HCT116 (cell line): ENCODE measurements at regions of chr12 and their contacts with region 1.

Region 1: DNA sequence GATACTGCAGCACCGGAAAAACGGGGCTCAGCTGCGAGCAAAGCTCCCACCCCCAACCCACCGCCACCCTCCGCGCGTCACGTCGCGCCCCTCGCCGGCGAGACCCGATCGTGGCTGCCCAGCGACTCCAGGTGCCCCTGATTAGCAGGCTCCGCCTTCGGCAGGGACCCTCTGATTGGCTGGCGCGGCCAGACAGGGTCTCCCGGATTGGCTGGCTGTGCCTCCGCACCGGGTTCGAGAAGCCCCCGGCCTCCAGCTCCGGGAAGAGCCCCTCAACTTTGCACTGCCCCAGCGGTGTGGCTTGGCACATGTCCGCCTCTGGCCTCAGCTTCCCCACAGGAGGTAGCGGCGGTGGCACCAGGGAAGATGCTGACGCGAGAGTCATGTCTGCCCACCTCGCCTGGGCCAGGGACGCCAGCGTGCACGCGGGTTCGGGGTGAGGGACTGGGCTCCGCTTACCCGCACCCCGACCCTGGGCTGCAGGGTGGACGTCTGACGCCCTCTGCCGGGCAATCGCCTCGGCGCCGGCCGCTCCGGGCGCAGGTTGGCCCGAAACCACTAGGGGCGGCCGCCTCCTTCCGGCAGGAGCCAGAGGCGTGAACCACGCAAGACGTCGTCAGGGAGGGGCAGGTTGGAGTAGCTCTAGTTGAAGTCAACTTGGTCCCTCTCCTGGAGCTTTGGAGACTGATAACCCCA is 498 bp upstream of the RHOF start:
- DNase-seq: peak; percentile 89
- ATAC-seq: peak; percentile 68
- H3K4me3 ChIP-seq: peak overlapping the region; percentile 90 to 91
- H3K27ac ChIP-seq: peak overlapping the region; percentile 100
- H3K4me1 ChIP-seq: peaks cover 60 to 92% of the 10 kb centered on the region in 2 experiments
- H3K27me3 ChIP-seq: no peaks in the 10 kb centered on the region
- CTCF ChIP-seq: peak in 2 of 3 experiments; percentile 99 to 100; a peak in 4 of 6 replicates
- POLR2A ChIP-seq: peak; percentile 43
- RAD21 ChIP-seq: no peak

Region 2: DNA sequence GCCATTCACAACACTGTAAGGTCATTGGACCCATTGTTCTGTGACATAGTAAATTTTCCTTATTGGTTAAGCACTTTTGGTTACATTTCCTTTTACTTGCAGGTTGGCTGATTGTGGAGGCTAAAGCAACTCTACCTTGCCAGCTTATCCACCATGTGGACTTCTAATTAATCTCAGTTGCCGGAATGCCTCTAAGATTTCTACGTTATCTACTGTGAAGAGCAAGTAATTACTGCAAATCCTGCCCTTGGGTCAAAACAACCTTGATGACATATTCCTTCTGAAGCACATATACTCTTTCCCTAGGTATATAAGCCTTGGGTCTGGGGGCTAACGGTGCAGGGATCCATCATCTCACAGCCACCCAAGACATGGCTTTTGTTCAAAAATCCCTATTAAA is 105.0 kb before region 1 on chr12:
- CTCF ChIA-PET with region 1: interaction called, 16 read pairs
- POLR2A ChIA-PET with region 1: no interaction called
- RAD21 ChIA-PET with region 1: interaction called in 1 of 2 experiments, 3 read pairs
- intact Hi-C with region 1: no loop called
- DNase-seq: no peak
- ATAC-seq: no peak
- H3K4me3 ChIP-seq: no peak overlapping the region
- H3K27ac ChIP-seq: no peak overlapping the region
- H3K4me1 ChIP-seq: peaks cover 4 to 15% of the 10 kb centered on the region in 2 experiments; a peak in 3 of 4 replicates
- H3K27me3 ChIP-seq: no peaks in the 10 kb centered on the region
- CTCF ChIP-seq: no peak
- POLR2A ChIP-seq: no peak
- RAD21 ChIP-seq: no peak

Region 3: GRCh38 chr12:121712461-121713256 is 81.3 kb before region 1 on chr12 and contains the start of gene TMEM120B:
- CTCF ChIA-PET with region 1: interaction called, 20 read pairs
- POLR2A ChIA-PET with region 1: no interaction called
- RAD21 ChIA-PET with region 1: no interaction called
- intact Hi-C with region 1: no loop called
- DNase-seq: no peak
- ATAC-seq: peak; percentile 89
- H3K4me3 ChIP-seq: peak within 1 kb of the TSS; percentile 89 to 94
- H3K27ac ChIP-seq: peak within 1 kb of the TSS; percentile 66
- H3K4me1 ChIP-seq: peaks cover 10 to 51% of the 10 kb centered on the region in 2 experiments; a peak in 3 of 4 replicates
- H3K27me3 ChIP-seq: no peaks in the 10 kb centered on the region
- CTCF ChIP-seq: peak in 2 of 3 experiments; percentile 8 to 26; a peak in 2 of 6 replicates
- POLR2A ChIP-seq: peak; percentile 74
- RAD21 ChIP-seq: no peak
- total RNA-seq, gene TMEM120B: 20.5 TPM

Region 4: GRCh38 chr12:121811434-121812319 is 17.7 kb after region 1 on chr12:
- CTCF ChIA-PET with region 1: interaction called, 149 read pairs
- POLR2A ChIA-PET with region 1: interaction called, 26 read pairs
- RAD21 ChIA-PET with region 1: interaction called, 22 to 26 read pairs
- intact Hi-C with region 1: loop called (anchors 1 kb)
- DNase-seq: no peak
- ATAC-seq: peak; percentile 91
- H3K4me3 ChIP-seq: peak overlapping the region; percentile 44 to 55
- H3K27ac ChIP-seq: peak overlapping the region; percentile 53
- H3K4me1 ChIP-seq: peaks cover 6 to 27% of the 10 kb centered on the region in 2 experiments
- H3K27me3 ChIP-seq: no peaks in the 10 kb centered on the region
- CTCF ChIP-seq: peak; percentile 86 to 96 (median 90)
- POLR2A ChIP-seq: no peak
- RAD21 ChIP-seq: peak; percentile 87

Region 5: GRCh38 chr12:121888478-121889266 is 94.7 kb after region 1 on chr12 and contains the start of gene PSMD9:
- CTCF ChIA-PET with region 1: interaction called, 96 read pairs
- POLR2A ChIA-PET with region 1: interaction called, 38 read pairs
- RAD21 ChIA-PET with region 1: interaction called, 16 to 19 read pairs
- intact Hi-C with region 1: loop called (anchors 1 kb)
- DNase-seq: peak; percentile 98
- ATAC-seq: peak; percentile 94
- H3K4me3 ChIP-seq: peak within 1 kb of the TSS; percentile 95 to 97
- H3K27ac ChIP-seq: peak within 1 kb of the TSS; percentile 86
- H3K4me1 ChIP-seq: peaks cover 17 to 46% of the 10 kb centered on the region in 2 experiments; a peak in 3 of 4 replicates
- H3K27me3 ChIP-seq: no peaks in the 10 kb centered on the region
- CTCF ChIP-seq: peak; percentile 42 to 97 (median 69)
- POLR2A ChIP-seq: peak; percentile 35
- RAD21 ChIP-seq: peak; percentile 98
- total RNA-seq, gene PSMD9: 55.5 TPM

Region 6: GRCh38 chr12:121917979-121918678 is 124.1 kb after region 1 on chr12 and contains the start of gene CFAP251:
- CTCF ChIA-PET with region 1: interaction called, 16 read pairs
- POLR2A ChIA-PET with region 1: no interaction called
- RAD21 ChIA-PET with region 1: no interaction called
- intact Hi-C with region 1: no loop called
- DNase-seq: peak; percentile 85
- ATAC-seq: peak; percentile 98
- H3K4me3 ChIP-seq: peak within 1 kb of the TSS; percentile 46 to 52
- H3K27ac ChIP-seq: peak within 1 kb of the TSS; percentile 40
- H3K4me1 ChIP-seq: peaks cover 7 to 18% of the 10 kb centered on the region in 2 experiments; a peak in 3 of 4 replicates
- H3K27me3 ChIP-seq: no peaks in the 10 kb centered on the region
- CTCF ChIP-seq: peak; percentile 38 to 76 (median 64); a peak in 5 of 6 replicates
- POLR2A ChIP-seq: no peak
- RAD21 ChIP-seq: peak; percentile 79
- total RNA-seq, gene CFAP251: 2.6 TPM